Left cardiac atrium (tissue), 4 donors: ENCODE measurements at regions of chr10 and their contacts with region 1.

Region 1: GRCh38 chr10:128011175-128011979 is 104.5 kb downstream of the PTPRE start:
- DNase-seq: peak; percentile 85
- ATAC-seq: peak; percentile 87 to 89

Region 2: DNA sequence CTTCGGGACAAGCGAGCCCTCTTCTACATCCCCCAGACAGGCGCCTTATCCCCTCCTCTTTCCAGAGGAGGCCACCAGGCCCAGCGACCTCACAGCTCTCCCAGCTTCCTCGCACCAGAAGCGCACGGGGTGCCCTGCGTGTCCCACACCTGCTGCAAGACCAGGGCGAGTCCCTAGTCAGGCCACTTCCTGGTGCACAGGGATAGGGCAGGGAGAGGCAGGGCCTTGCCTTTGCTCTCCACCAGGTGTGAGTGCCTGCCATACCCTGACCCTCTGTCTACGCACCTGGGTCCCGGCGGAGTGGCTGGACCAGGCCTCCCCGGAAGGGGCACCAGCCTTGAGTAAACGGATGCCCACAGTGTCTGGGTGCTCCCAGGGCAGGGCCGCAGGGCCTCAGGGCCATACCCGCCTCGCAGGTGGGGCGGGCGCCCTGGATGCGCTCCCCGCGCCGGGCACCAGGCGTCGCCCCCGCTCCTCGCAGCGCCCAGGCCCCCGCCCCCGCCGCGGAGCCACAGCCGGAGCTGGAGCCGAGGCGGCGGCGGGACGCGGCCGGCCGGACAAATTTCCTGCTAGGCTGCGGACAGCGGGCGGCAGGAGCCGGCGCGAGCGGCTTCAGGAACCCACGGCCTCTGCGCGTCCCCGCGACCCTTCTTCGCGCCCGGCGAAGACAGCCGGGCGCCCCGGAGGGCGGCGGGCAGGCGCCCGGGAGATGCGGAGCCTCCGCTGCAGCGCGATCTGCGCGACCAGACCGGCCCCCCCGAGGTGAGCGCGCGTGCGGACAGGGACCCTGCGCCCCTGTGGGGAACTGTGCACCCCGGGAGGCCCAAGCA is 104.6 kb before region 1 on chr10 and contains the start of gene PTPRE:
- intact Hi-C with region 1: loop called (anchors 1 to 2 kb)
- DNase-seq: peak; percentile 85
- ATAC-seq: peak; percentile 86 to 92
- total RNA-seq, gene PTPRE: 14.2 to 24.3 TPM